ENCODE measurements at regions of chr21 and their contacts with region 1.

Region 1: GRCh38 chr21:14864211-14865021 is 200.4 kb downstream of the NRIP1 start:
- DNase-seq: peak; percentile 67 to 68
- ATAC-seq: peak; percentile 86 to 95 (median 90)
- H3K4me3 ChIP-seq: no peak overlapping the region
- H3K27ac ChIP-seq: peak overlapping the region in 2 of 10 donors; percentile 7 to 9
- H3K4me1 ChIP-seq: peaks cover 0 to 43% (median 17%) of the 10 kb centered on the region in 9 donors
- H3K27me3 ChIP-seq: no peaks in the 10 kb centered on the region
- CTCF ChIP-seq: peak; percentile 25 to 70 (median 63)

Region 2: GRCh38 chr21:14259747-14260146 is 604.7 kb before region 1 on chr21:
- intact Hi-C with region 1: loop called in 1 of 10 experiments (anchors 5 kb)
- DNase-seq: no peak
- ATAC-seq: peak in 3 of 8 donors; percentile 57 to 63 (median 61)
- H3K4me3 ChIP-seq: no peak overlapping the region
- H3K27ac ChIP-seq: no peak overlapping the region
- H3K4me1 ChIP-seq: no peaks in the 10 kb centered on the region
- H3K27me3 ChIP-seq: peaks cover 0 to 7% (median 0%) of the 10 kb centered on the region in 7 donors
- CTCF ChIP-seq: peak in 8 of 9 donors; percentile 27 to 69 (median 59)

Region 3: DNA sequence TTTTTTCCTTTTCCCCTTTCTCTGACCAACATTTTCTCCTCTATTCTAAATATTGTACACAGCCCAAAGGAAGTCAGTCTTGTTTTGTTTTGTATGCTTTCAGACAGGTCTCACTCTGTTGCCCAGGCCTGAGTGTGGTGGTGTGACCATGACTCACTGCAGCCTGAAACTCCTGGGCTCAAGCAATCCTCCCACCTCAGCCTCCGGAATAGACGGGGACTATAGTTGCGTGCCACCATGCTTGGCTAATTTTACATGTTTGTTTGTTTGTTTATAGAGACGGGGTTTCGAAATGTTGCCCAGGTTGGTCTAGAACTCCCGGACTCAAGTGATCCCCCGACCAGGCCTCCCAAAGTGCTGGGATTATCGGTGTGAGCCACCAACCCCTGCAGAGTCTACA is 127.5 kb after region 1 on chr21:
- intact Hi-C with region 1: loop called in 1 of 10 experiments (anchors 5 kb)
- DNase-seq: no peak
- ATAC-seq: no peak
- H3K4me3 ChIP-seq: no peak overlapping the region
- H3K27ac ChIP-seq: no peak overlapping the region
- H3K4me1 ChIP-seq: peaks cover 0 to 45% (median 16%) of the 10 kb centered on the region in 9 donors
- H3K27me3 ChIP-seq: no peaks in the 10 kb centered on the region
- CTCF ChIP-seq: no peak

Region 4: DNA sequence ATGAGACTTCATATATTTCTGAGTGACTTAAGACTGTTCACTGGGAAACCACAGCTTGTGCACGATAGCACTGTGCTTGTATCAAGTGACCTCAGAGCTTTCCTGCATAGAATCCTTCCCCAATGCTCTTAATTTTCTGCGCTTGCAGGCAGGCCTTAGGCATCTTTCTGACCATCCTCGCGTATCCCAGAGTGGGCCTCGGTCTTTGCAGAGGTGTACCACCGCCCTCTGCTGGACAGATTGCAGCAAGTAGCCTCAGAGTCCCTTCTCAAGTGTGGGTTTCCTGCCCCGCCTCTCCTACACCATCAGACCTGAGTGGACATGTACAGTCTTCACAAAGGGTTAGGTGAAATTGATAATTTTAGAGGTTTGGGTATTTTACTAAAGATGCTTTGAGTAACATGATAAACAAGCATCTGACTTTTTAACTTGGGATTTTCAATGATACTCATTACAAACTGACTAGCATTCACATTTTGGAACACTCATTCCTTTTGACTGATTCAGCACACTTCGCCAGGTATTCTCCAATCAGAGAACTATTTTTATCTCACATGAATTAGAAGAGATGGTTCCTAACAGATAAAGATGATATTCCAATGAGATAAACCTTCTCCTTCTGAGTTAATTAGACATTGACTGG is 618.8 kb after region 1 on chr21:
- intact Hi-C with region 1: loop called (anchors 1 to 10 kb)
- DNase-seq: peak; percentile 81 to 89
- ATAC-seq: peak; percentile 93 to 100 (median 98)
- H3K4me3 ChIP-seq: no peak overlapping the region
- H3K27ac ChIP-seq: no peak overlapping the region
- H3K4me1 ChIP-seq: no peaks in the 10 kb centered on the region
- H3K27me3 ChIP-seq: no peaks in the 10 kb centered on the region
- CTCF ChIP-seq: peak; percentile 84 to 97 (median 93)

Region 5: GRCh38 chr21:15592271-15592860 is 728.0 kb after region 1 on chr21:
- intact Hi-C with region 1: loop called in 2 of 10 experiments (anchors 10 kb)
- DNase-seq: no peak
- ATAC-seq: peak in 1 of 8 donors; percentile 47
- H3K4me3 ChIP-seq: no peak overlapping the region
- H3K27ac ChIP-seq: no peak overlapping the region
- H3K4me1 ChIP-seq: no peaks in the 10 kb centered on the region
- H3K27me3 ChIP-seq: peaks cover 0 to 5% (median 0%) of the 10 kb centered on the region in 7 donors
- CTCF ChIP-seq: peak; percentile 25 to 72 (median 59)